Left cardiac atrium (tissue), 4 donors: ENCODE measurements at regions of chr3 and their contacts with region 1.

Region 1: DNA sequence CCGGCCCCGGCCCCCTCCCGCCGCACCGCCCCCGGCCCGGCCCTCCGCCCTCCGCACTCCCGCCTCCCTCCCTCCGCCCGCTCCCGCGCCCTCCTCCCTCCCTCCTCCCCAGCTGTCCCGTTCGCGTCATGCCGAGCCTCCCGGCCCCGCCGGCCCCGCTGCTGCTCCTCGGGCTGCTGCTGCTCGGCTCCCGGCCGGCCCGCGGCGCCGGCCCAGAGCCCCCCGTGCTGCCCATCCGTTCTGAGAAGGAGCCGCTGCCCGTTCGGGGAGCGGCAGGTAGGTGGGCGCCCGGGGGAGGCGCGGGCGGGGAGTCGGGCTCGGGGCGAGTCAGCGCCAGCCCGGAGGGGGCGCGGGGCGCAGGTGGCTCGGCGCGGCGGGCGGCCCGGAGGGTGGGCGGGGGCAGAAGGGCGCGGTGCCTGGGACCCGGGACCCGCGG is 355 bp downstream of the CHRD start:
- DNase-seq: peak; percentile 75
- ATAC-seq: peak; percentile 45 to 51

Region 2: GRCh38 chr3:184786280-184786941 is 406.2 kb after region 1 on chr3:
- intact Hi-C with region 1: loop called in 1 of 2 experiments (anchors 10 kb)
- DNase-seq: peak; percentile 70
- ATAC-seq: peak; percentile 86 to 90

Region 3: DNA sequence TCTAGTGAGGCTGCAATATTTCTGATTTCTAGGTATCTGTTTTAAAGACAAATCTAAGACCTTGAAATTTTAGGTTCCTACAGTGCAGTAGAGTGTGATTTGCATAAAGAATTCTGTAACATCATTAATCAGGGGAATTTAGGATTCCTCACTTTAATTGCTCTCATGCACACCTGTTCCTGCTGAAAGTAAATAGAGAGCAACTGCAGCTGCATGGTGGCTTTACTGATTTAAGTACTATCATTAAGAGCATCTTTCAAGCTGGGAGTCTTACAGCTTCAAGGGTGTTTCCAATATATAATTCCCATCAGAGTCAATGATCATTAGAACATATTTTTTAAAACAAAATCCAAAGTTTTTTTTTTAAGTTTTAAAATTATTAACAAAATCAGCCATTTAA is 808.6 kb after region 1 on chr3:
- intact Hi-C with region 1: no loop called
- DNase-seq: no peak
- ATAC-seq: no peak